Endothelial cell of umbilical vein (primary cell): ENCODE measurements at regions of chr15 and their contacts with region 1.

Region 1: GRCh38 chr15:79339564-79340314 is 28.8 kb downstream of the TMED3 start:
- DNase-seq: peak; percentile 69
- H3K4me3 ChIP-seq: no peak overlapping the region
- H3K27ac ChIP-seq: no peak overlapping the region
- H3K4me1 ChIP-seq: no peaks in the 10 kb centered on the region
- H3K27me3 ChIP-seq: no peaks in the 10 kb centered on the region
- CTCF ChIP-seq: peak; percentile 61 to 71
- POLR2A ChIP-seq: no peak

Region 2: DNA sequence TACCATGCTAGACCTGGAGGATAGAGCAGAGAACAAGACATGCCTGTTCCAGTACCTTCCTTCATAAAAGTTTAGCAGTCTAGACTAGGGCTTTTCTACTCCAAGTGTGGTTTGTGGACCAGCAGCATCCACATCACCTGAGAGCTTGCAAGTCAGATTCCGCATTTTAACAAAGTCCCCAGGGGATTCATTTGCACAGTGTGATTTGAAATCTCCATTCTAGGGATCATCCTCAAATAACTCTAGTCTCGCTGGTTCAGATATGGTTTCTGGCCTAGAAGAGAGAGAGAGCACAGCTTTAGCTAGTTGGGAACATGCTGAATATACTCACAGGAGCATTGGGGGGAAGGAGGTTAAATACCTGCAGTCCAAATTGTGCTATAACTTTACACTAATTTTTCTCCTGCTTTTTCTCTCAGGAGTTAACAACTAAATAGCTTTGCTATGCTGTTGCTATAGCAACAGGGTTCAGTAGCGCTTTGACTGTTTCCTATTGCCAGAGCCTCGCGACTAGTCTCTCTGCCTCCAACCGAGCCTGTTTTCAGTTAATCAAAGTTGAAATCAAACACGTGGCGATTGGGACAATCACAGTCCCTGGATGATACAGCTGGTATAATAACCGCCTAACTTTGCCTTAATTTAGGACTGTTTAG is 185.1 kb before region 1 on chr15:
- CTCF ChIA-PET with region 1: no interaction called
- POLR2A ChIA-PET with region 1: no interaction called
- dilution Hi-C with region 1: no loop called
- intact Hi-C with region 1: no loop called
- DNase-seq: no peak
- H3K4me3 ChIP-seq: no peak overlapping the region
- H3K27ac ChIP-seq: no peak overlapping the region
- H3K4me1 ChIP-seq: no peaks in the 10 kb centered on the region
- H3K27me3 ChIP-seq: no peaks in the 10 kb centered on the region
- CTCF ChIP-seq: no peak
- POLR2A ChIP-seq: no peak

Region 3: GRCh38 chr15:79322945-79323344 is 16.8 kb before region 1 on chr15:
- CTCF ChIA-PET with region 1: interaction called, 20 read pairs
- POLR2A ChIA-PET with region 1: no interaction called
- dilution Hi-C with region 1: no loop called
- intact Hi-C with region 1: no loop called
- DNase-seq: peak; percentile 92
- H3K4me3 ChIP-seq: no peak overlapping the region
- H3K27ac ChIP-seq: peak overlapping the region; percentile 65
- H3K4me1 ChIP-seq: peaks cover 18% of the 10 kb centered on the region
- H3K27me3 ChIP-seq: no peaks in the 10 kb centered on the region
- CTCF ChIP-seq: no peak
- POLR2A ChIP-seq: peak; percentile 60

Region 4: GRCh38 chr15:79364571-79365240 is 25.0 kb after region 1 on chr15:
- CTCF ChIA-PET with region 1: interaction called, 13 read pairs
- POLR2A ChIA-PET with region 1: no interaction called
- dilution Hi-C with region 1: no loop called
- intact Hi-C with region 1: no loop called
- DNase-seq: no peak
- H3K4me3 ChIP-seq: no peak overlapping the region
- H3K27ac ChIP-seq: no peak overlapping the region
- H3K4me1 ChIP-seq: no peaks in the 10 kb centered on the region
- H3K27me3 ChIP-seq: no peaks in the 10 kb centered on the region
- CTCF ChIP-seq: no peak
- POLR2A ChIP-seq: no peak

Region 5: GRCh38 chr15:79989682-79990081 is 649.9 kb after region 1 on chr15:
- CTCF ChIA-PET with region 1: interaction called, 19 read pairs
- POLR2A ChIA-PET with region 1: no interaction called
- dilution Hi-C with region 1: no loop called
- intact Hi-C with region 1: loop called (anchors 1 kb)
- DNase-seq: no peak
- H3K4me3 ChIP-seq: no peak overlapping the region
- H3K27ac ChIP-seq: no peak overlapping the region
- H3K4me1 ChIP-seq: no peaks in the 10 kb centered on the region
- H3K27me3 ChIP-seq: peaks cover under 1 to 3% of the 10 kb centered on the region in 2 experiments
- CTCF ChIP-seq: no peak
- POLR2A ChIP-seq: no peak